Activated naive CD4-positive, alpha-beta T cell treated with anti-CD3 and anti-CD28 coated beads for 36 hours (primary cell): ENCODE measurements at regions of chr2 and their contacts with region 1.

Region 1: GRCh38 chr2:85308896-85309555 is 18.8 kb downstream of the TGOLN2 start:
- DNase-seq: no peak
- H3K4me3 Mint-ChIP-seq: peak overlapping the region; percentile 51
- H3K27ac Mint-ChIP-seq: peak overlapping the region; percentile 68
- H3K4me1 Mint-ChIP-seq: peaks cover 36% of the 10 kb centered on the region
- H3K27me3 Mint-ChIP-seq: no peaks in the 10 kb centered on the region

Region 2: GRCh38 chr2:85327822-85328617 is 19.0 kb after region 1 on chr2 and contains the start of gene TGOLN2:
- CTCF ChIA-PET with region 1: interaction called, 5 read pairs
- intact Hi-C with region 1: loop called (anchors 2 kb)
- DNase-seq: peak; percentile 95
- H3K4me3 Mint-ChIP-seq: peak within 1 kb of the TSS; percentile 99
- H3K27ac Mint-ChIP-seq: peak within 1 kb of the TSS; percentile 99
- H3K4me1 Mint-ChIP-seq: peaks cover 25% of the 10 kb centered on the region
- H3K27me3 Mint-ChIP-seq: no peaks in the 10 kb centered on the region
- total RNA-seq, gene TGOLN2: 82.5 to 85.4 TPM

Region 3: GRCh38 chr2:85750587-85751575 is 441.9 kb after region 1 on chr2:
- CTCF ChIA-PET with region 1: no interaction called
- intact Hi-C with region 1: no loop called
- DNase-seq: peak; percentile 76
- H3K4me3 Mint-ChIP-seq: no peak overlapping the region
- H3K27ac Mint-ChIP-seq: no peak overlapping the region
- H3K4me1 Mint-ChIP-seq: peaks cover 14% of the 10 kb centered on the region
- H3K27me3 Mint-ChIP-seq: peaks cover 58% of the 10 kb centered on the region